A673 (cell line): ENCODE measurements at regions of chr16 and their contacts with region 1.

Region 1: DNA sequence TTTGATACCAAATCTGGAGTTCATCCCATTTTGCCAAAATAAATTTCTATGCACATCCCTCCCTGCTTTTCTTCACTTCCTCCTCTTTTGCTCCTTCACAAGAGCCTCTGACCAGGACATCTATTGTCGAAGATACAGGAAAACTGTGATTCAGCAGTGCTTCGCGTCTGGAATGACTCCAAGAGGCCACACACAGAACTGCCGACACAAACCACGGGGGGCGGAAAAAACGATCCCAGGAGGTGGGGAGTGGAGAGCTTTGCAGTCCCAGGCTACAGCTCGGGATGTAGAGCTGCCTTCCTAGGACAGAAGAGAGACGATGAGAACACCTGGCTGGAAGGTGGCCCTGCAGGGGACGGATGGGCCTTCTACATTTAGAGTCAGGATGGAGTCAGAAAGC is 102.8 kb downstream of the XYLT1 start:
- DNase-seq: peak; percentile 74
- H3K4me3 ChIP-seq: no peak overlapping the region
- H3K27ac ChIP-seq: no peak overlapping the region
- H3K4me1 ChIP-seq: peaks cover 16% of the 10 kb centered on the region
- H3K27me3 ChIP-seq: no peaks in the 10 kb centered on the region
- CTCF ChIP-seq: no peak

Region 2: GRCh38 chr16:17289674-17290635 is 78.0 kb before region 1 on chr16:
- CTCF ChIA-PET with region 1: no interaction called
- POLR2A ChIA-PET with region 1: no interaction called
- intact Hi-C with region 1: loop called (anchors 2 kb)
- DNase-seq: no peak
- H3K4me3 ChIP-seq: no peak overlapping the region
- H3K27ac ChIP-seq: no peak overlapping the region
- H3K4me1 ChIP-seq: no peaks in the 10 kb centered on the region
- H3K27me3 ChIP-seq: no peaks in the 10 kb centered on the region
- CTCF ChIP-seq: no peak

Region 3: DNA sequence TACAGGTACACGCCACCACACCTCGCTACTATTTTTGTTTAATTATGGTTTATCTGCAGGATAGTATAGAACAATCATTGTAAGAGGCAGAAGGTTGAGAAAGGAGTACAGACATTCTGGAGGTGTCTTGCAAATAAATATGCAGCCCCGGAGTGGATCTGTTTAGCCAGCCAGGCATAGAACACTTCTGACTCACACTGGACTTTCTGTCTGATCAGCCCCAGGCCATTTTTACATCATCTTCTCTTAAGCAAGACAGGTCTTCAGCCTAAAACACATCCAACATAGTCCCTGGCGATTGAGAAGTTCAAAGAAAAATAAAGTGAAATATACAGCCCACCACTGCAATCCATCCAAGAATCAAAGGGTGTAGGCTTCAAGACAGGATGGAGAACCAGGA is 21.5 kb after region 1 on chr16:
- CTCF ChIA-PET with region 1: no interaction called
- POLR2A ChIA-PET with region 1: no interaction called
- intact Hi-C with region 1: no loop called
- DNase-seq: no peak
- H3K4me3 ChIP-seq: no peak overlapping the region
- H3K27ac ChIP-seq: no peak overlapping the region
- H3K4me1 ChIP-seq: no peaks in the 10 kb centered on the region
- H3K27me3 ChIP-seq: no peaks in the 10 kb centered on the region
- CTCF ChIP-seq: no peak